ENCODE measurements at regions of chr6 and their contacts with region 1.

Region 1: GRCh38 chr6:100664274-100665040 is 199.7 kb upstream of the SIM1 start:
- DNase-seq: no peak
- H3K4me3 ChIP-seq: no peak overlapping the region
- H3K27ac ChIP-seq: no peak overlapping the region
- H3K4me1 ChIP-seq: no peaks in the 10 kb centered on the region
- H3K27me3 ChIP-seq: no peaks in the 10 kb centered on the region
- CTCF ChIP-seq: peak; percentile 20 to 60 (median 51)
- POLR2A ChIP-seq: no peak

Region 2: DNA sequence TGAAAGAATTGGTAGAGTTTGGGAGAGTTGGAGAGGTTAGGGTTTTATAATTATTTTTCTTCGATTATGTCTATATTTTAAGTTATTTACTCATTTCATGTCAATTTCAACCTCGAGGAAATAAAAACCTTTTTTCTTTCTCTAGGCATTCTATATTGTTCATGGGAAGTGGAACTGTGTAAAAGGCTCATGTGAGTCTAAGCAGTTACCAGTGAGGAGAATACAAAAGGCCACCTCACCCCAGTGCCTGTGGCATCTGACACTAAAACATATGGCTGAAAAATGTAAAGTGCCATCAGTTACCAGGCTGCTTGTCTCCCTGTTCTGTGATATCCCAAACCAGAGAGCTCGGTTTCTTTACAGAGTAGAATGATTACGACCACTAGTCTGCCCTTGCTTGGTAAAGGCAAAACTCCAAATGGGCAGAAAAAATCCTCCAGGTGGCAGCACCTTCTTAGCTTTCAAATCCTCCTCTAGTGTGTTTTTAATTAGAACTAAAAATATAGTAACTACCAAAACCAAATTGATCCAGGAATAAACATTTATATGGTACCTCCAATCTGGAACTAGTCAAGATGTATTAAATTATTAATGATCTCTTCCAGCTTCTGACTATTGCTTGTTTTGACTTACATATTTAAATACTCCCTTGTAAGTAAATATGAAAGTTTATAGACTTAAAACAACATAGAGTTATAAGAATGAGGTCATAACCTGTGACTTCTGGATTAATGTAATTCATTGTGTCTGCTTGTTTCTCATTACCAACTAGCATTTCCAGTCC is 547.9 kb before region 1 on chr6:
- intact Hi-C with region 1: loop called (anchors 10 kb)
- DNase-seq: peak; percentile 7
- H3K4me3 ChIP-seq: no peak overlapping the region
- H3K27ac ChIP-seq: no peak overlapping the region
- H3K4me1 ChIP-seq: no peaks in the 10 kb centered on the region
- H3K27me3 ChIP-seq: no peaks in the 10 kb centered on the region
- CTCF ChIP-seq: peak; percentile 21 to 56 (median 46)
- POLR2A ChIP-seq: no peak